ENCODE measurements at regions of chr11 and their contacts with region 1.

Region 1: GRCh38 chr11:76419896-76420295 is 24.9 kb upstream of the EMSY start:
- DNase-seq: no peak
- H3K4me3 ChIP-seq: no peak overlapping the region
- H3K27me3 ChIP-seq: peaks cover 9% of the 10 kb centered on the region
- CTCF ChIP-seq: peak; percentile 29; the same call in 1 of the 2 replicates

Region 2: GRCh38 chr11:76293189-76293631 is 126.7 kb before region 1 on chr11:
- CTCF ChIA-PET with region 1: no interaction called
- POLR2A ChIA-PET with region 1: interaction called, 20 read pairs
- DNase-seq: no peak
- H3K4me3 ChIP-seq: no peak overlapping the region
- H3K27me3 ChIP-seq: peaks cover 3% of the 10 kb centered on the region
- CTCF ChIP-seq: no peak

Measured in BJ (cell line).